ENCODE measurements at regions of chr13 and their contacts with region 1.

Region 1: DNA sequence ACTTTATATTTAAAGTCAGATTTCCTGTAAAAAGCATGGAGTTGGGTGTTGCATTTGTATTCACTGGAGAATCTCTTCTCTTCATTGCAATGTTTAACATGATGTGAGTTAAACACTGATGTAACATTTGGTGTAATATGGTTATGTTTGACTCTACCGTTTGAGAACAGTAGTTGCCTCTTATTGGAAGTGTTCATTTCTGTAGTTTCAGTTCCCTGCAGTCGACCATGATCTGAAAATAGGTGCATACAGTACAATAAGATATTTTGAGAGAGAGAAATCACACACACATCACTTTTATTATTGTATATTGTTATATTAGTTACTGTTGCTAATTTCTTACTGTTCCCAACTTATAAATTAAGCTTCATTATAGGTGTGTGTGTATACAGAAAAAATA is 105.2 kb upstream of the SPACA7 start:
- DNase-seq: no peak
- ATAC-seq: no peak
- H3K4me3 ChIP-seq: no peak overlapping the region
- H3K27ac ChIP-seq: no peak overlapping the region
- H3K4me1 ChIP-seq: no peaks in the 10 kb centered on the region
- H3K27me3 ChIP-seq: no peaks in the 10 kb centered on the region
- CTCF ChIP-seq: no peak
- POLR2A ChIP-seq: no peak
- RAD21 ChIP-seq: no peak

Region 2: DNA sequence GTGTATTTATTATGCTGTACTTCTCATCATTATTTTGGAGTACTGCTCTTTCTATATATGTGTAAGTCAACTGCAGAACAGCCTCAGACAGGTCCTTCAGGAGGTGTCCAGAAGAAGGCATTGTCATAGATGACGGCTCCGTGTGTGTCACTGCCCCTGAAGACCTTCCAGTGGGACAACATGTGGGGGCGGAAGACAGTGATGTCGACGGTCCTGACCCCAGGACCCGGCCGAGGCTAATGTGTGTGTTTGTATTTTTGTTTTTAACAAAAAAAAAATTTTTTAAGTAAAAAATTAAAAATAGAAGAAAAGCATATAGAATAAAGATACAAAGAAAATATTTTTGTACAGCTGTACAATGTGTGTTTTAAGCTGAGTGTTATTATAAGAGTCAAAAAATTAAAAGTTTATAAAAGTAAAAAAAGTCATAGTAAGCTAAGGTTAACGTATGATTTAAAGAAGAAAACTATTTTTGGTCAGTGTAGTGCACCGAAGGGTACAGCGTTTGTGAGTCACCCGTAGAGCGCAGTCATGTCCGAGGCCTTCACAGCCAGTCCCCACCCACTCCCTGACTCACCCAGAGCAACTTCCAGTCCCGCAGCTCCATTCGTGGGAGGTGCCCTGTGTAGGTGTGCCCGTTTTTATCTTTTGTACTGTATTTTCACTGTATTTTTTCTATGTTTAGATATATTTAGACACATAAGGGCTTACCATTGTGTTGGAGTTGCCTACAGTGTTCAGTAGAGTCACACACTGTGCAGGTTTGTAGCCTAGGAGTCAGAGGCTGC is 63.0 kb after region 1 on chr13:
- CTCF ChIA-PET with region 1: no interaction called
- POLR2A ChIA-PET with region 1: no interaction called
- dilution Hi-C with region 1: no loop called
- in situ Hi-C with region 1: loop called (anchors 10 kb)
- intact Hi-C with region 1: no loop called
- DNase-seq: no peak
- ATAC-seq: no peak
- H3K4me3 ChIP-seq: no peak overlapping the region
- H3K27ac ChIP-seq: no peak overlapping the region
- H3K4me1 ChIP-seq: no peaks in the 10 kb centered on the region
- H3K27me3 ChIP-seq: no peaks in the 10 kb centered on the region
- CTCF ChIP-seq: no peak
- POLR2A ChIP-seq: no peak
- RAD21 ChIP-seq: no peak

Measured in IMR-90 (cell line).